ENCODE measurements at regions of chrX and their contacts with region 1.

Region 1: DNA sequence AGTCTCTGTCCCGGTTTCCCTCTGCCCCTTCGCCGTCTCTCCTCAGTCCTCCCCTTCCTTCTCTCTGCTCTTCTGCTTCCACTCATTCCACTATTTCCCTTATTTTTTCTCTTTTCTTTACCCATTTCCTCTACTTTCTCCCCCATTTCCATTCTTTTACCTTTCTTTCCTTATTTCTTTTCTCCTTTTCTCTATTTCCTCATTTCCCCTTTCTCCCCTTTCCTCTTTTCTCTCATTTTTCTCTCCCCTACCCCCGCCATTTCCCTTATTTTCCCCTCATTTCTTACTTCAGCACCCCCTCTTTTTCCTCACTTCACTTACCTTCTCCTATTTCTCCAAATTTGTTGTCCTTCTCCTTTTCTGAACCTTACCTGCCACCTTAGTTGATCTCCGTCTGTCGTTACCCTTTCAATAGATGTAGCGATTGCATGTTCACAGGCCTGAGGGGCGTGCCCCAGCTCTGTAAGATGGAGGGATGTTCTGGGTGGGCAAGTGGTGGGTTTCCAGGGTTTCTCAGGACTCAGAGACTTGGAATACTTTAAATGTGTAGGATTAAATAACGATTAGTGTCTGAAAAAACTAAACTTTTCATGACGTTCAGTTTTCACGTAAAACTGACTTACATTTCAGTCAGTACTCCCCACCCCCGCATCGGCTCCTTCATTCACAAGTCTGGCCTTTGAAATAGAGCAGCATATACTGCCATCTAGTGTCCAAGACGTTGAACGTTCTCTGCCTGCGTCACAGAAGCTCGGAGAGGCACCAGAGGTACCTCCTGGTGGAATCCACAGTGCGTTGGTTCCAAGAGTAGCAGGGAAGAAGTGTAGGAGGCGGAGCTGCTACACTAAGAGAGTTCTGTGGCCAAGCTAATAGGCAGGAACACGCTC is 641 bp upstream of the NCBP2L start:
- DNase-seq: peak; percentile 88

Region 2: DNA sequence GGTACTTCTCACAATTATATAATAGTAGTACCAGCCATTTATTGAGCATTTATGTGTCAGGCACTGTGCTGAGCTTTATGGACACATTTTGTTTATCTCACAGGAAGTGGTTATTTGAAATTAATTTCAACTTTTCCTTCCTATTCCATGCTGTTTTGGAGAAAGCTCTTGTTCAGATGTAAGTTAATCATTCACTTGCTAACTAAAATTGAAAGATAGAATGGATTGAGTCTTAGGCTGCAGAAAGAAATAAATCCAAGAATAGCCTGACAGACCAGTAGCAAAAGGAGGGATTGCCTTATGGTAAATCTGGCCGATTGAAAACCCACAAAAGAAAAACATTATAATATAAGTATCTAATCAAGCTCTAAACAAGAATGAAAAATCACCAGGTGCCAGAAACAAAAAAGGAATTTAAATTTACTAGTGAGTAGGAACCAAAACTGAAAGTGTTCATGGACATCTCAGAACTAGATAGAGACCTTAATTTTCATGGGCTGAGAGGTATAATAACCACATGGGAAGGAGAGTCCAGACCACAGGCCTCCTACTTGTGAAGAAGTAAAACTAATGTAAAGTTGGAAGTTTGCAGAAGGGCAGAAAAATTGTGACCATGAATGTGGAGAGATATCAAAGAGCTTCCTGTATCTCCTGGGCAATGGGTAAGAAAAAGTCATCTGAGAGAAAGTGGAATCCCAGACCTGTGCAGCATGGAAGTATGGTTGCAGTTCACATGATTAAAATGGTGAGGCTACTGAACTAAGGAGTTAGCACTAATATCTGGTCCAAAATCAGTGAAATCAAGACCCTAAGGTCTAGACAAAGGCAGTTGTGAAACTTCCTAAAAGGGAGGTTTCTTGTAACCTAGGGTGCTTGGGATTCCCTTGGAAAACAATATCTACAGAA is 1127.1 kb before region 1 on chrX:
- intact Hi-C with region 1: no loop called
- DNase-seq: no peak

Region 3: GRCh38 chrX:107654872-107655761 is 121.8 kb before region 1 on chrX:
- intact Hi-C with region 1: loop called (anchors 5 kb)
- DNase-seq: peak; percentile 85

Region 4: DNA sequence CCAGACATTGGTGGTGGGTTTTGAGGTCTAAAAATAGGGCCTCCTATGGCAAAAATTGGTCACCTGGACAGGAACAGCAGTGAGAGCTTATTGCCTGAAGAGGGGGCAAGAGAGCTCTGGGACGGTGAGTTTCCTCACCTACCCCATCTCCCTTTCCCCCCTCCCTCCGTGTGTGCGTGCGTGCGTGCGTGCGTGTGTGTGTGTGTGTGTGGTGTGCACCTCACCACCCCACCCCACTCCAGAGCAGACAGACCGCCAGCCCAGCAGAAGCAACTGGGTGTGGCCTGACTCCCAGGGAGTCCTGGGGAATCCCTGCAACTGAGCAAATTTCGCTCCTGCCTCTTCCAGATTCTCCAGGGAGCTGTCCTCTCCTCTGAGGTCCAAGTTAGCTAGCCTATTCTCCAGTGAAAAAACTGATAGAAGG is 103.9 kb before region 1 on chrX:
- intact Hi-C with region 1: loop called in 1 of 2 experiments (anchors 5 kb)
- DNase-seq: peak; percentile 93

Region 5: GRCh38 chrX:107701493-107702121 is 75.3 kb before region 1 on chrX:
- intact Hi-C with region 1: no loop called
- DNase-seq: no peak

Region 6: GRCh38 chrX:107716816-107717700 is 59.8 kb before region 1 on chrX:
- intact Hi-C with region 1: loop called (anchors 10 kb)
- DNase-seq: peak; percentile 96

Region 7: DNA sequence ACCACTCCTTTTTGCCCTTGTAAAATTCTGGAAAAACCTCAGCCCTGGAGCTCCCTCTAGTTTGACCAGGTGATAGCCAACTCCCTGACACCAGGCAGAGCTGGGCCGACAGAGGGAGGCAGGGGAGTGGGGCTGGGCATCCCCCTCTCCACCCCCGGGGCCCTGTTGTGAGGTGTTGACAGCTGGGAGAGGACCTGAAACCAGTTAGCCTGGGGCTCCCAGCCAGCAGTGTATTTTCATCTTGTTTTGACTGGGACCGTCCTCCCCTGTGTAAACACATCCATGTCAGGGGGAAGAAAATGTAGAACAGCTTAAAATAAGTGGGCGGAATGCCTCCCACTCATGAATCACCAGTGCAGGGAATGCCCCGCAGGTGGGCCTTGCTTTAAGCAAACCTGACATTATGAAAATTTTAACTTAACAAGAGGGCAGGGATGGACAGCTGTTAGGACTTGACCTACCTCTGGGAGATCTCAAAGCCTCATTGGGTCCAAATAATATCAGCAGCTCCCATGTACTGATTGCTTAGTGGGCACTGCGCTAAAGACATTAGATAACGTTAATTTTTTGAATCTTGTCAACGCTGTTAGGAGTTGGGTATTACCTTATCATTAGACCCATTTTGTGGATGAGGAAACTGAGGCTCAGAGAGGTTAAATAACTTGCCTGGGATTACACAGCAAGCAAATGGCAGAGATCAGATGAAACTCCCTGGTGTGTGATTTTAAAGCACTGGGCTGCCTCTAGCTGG is 47.2 kb before region 1 on chrX:
- intact Hi-C with region 1: loop called in 1 of 2 experiments (anchors 10 kb)
- DNase-seq: peak; percentile 77